ENCODE measurements at regions of chr15 and their contacts with region 1.

Region 1: GRCh38 chr15:50908210-50909009 is at the start of gene AP4E1:
- DNase-seq: peak; percentile 93
- ATAC-seq: peak; percentile 58
- H3K4me3 Mint-ChIP-seq: peak within 1 kb of the TSS; percentile 91
- H3K27ac Mint-ChIP-seq: peak within 1 kb of the TSS; percentile 97
- H3K4me1 Mint-ChIP-seq: peaks cover 40% of the 10 kb centered on the region
- H3K27me3 Mint-ChIP-seq: no peaks in the 10 kb centered on the region
- CTCF ChIP-seq: no peak
- total RNA-seq, gene AP4E1: 11.1 and 13.4 TPM in 2 replicates

Region 2: GRCh38 chr15:49620658-49621368 is 1287.6 kb before region 1 on chr15 and contains the starts of genes DTWD1 and FAM227B:
- CTCF ChIA-PET with region 1: interaction called, 3 read pairs
- POLR2A ChIA-PET with region 1: no interaction called
- intact Hi-C with region 1: loop called (anchors 2 kb)
- DNase-seq: peak; percentile 90
- ATAC-seq: peak; percentile 96
- H3K4me3 Mint-ChIP-seq: peak within 1 kb of the TSS; percentile 96
- H3K27ac Mint-ChIP-seq: peak within 1 kb of the TSS; percentile 96
- H3K4me1 Mint-ChIP-seq: peaks cover 31% of the 10 kb centered on the region
- H3K27me3 Mint-ChIP-seq: no peaks in the 10 kb centered on the region
- CTCF ChIP-seq: no peak
- total RNA-seq, gene DTWD1: 20.5 and 21.4 TPM in 2 replicates
- total RNA-seq, gene FAM227B: 4.3 and 4.5 TPM in 2 replicates

Region 3: DNA sequence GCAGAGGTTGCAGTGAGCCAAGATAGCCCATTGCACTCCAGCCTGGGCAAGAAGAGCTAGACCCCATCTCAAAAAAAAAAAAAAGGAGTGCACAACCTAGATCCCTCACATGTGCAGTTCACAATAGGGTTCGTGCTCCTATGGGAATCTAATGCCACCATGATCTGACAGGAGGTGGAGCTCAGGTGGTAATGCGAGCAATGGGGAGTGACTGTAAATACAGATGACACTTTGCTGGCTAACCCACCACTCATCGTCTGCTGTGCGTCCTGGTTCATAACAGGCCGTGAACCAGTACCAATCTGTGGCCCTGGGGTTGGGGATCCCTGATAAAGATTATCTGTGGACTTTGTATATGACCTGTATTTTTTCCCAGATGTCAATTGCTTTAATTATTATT is 467.5 kb before region 1 on chr15:
- CTCF ChIA-PET with region 1: no interaction called
- POLR2A ChIA-PET with region 1: no interaction called
- intact Hi-C with region 1: loop called (anchors 5 kb)
- DNase-seq: no peak
- ATAC-seq: no peak
- H3K4me3 Mint-ChIP-seq: no peak overlapping the region
- H3K27ac Mint-ChIP-seq: no peak overlapping the region
- H3K4me1 Mint-ChIP-seq: peaks cover 30% of the 10 kb centered on the region
- H3K27me3 Mint-ChIP-seq: no peaks in the 10 kb centered on the region
- CTCF ChIP-seq: no peak

Region 4: DNA sequence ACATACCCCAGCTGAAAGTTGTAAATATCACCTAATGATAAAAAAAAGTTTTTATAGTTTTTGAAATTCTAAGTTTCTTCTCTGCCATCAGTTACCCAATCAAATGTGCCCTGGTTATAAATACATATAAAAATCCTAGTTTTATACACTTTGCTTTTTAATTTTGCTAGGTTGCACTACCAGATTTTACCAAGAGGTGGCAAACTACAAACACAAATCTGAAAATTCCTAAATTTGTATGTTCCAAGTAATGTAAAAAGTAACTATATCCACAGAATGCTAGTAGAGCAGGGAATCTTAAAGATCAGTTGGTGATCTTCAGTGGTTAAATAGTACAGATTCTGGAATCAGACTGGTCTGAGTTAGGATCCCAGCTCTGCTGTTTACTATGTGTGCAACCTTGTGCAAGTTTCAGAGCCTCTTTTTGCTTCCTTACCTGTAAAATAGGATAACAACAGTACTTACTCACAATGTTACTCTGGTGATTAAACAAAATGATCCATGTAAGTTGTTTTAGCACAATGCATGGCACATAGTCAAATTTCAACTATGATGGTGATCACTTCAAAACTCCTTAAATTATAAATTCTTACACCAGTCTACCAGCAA is 232.8 kb before region 1 on chr15:
- CTCF ChIA-PET with region 1: interaction called, 4 read pairs
- POLR2A ChIA-PET with region 1: interaction called, 3 read pairs
- intact Hi-C with region 1: loop called (anchors 1 kb)
- DNase-seq: no peak
- ATAC-seq: no peak
- H3K4me3 Mint-ChIP-seq: no peak overlapping the region
- H3K27ac Mint-ChIP-seq: peak overlapping the region; percentile 41
- H3K4me1 Mint-ChIP-seq: peaks cover 19% of the 10 kb centered on the region
- H3K27me3 Mint-ChIP-seq: no peaks in the 10 kb centered on the region
- CTCF ChIP-seq: peak; percentile 61

Region 5: GRCh38 chr15:50765195-50765973 is 143.0 kb before region 1 on chr15 and contains the start of gene SPPL2A:
- CTCF ChIA-PET with region 1: no interaction called
- POLR2A ChIA-PET with region 1: interaction called, 11 read pairs
- intact Hi-C with region 1: loop called (anchors 1 kb)
- DNase-seq: peak; percentile 87
- ATAC-seq: peak; percentile 94
- H3K4me3 Mint-ChIP-seq: peak within 1 kb of the TSS; percentile 97
- H3K27ac Mint-ChIP-seq: peak within 1 kb of the TSS; percentile 95
- H3K4me1 Mint-ChIP-seq: peaks cover 48% of the 10 kb centered on the region
- H3K27me3 Mint-ChIP-seq: no peaks in the 10 kb centered on the region
- CTCF ChIP-seq: no peak
- total RNA-seq, gene SPPL2A: 79.1 and 85.3 TPM in 2 replicates

Region 6: GRCh38 chr15:51281368-51281967 is 373.1 kb after region 1 on chr15:
- CTCF ChIA-PET with region 1: no interaction called
- POLR2A ChIA-PET with region 1: no interaction called
- intact Hi-C with region 1: no loop called
- DNase-seq: no peak
- ATAC-seq: no peak
- H3K4me3 Mint-ChIP-seq: no peak overlapping the region
- H3K27ac Mint-ChIP-seq: no peak overlapping the region
- H3K4me1 Mint-ChIP-seq: peaks cover 14% of the 10 kb centered on the region
- H3K27me3 Mint-ChIP-seq: peaks cover 16% of the 10 kb centered on the region
- CTCF ChIP-seq: no peak

Measured in activated B cell treated with CpG ODN at 0.5 μM for 24 hours (primary cell).